Activated T-helper 2 cell treated with anti-CD3 and anti-CD28 coated beads, Interferon-gamma antibody, Interleukin-2, Interleukin-4, amounts not matched to agents 10 μg/mL and 5 μg/mL and 100 μg/mL, durations not matched to agents 14 hours and 24 hours and 36 hours (primary cell): ENCODE measurements at regions of chr3 and their contacts with region 1.

Region 1: DNA sequence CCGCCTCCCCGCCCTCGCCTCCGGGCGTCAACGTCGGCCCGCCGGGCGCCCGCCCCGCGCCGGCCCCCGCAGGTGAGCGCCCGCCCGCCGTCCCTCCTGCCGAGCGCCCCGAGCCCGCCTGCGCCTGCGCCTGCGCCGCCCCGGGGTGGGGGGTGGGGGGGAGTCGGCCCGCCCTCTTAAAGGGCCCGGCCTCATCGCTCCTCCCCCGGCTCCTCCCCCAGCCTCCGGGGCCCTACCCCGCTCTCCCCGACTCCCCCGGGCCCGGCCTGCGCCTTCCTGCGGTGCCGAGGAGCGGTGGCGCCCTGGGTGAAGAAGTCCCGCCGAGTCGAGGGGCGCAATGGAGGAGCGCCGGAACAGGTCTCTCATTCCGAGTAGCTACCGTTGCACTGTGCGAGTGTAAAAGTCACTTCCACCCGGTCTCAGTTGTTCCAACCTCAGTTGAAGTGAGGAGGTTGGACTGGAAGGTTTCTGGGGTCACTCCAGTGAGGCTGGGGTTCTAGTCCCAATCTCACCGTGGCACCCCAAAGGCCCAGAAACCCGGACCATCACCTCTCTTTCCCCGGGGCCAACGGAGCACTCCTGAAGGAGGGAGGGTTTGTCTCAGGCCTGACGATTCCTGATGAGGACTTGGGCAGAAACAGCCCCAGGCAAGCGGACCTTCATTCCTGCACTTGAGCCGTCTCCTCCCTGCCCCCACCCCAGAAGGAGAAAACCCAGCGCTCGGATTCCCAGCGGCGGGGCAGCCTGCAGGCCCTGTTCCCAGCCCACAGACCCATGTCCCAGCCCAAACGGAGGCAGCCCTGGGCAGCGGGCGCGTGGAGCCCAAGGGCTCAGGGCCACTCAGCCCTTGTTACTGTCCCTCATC is 1.5 kb upstream of the TNK2 start:
- DNase-seq: peak; percentile 84
- H3K4me3 Mint-ChIP-seq: peak overlapping the region; percentile 57
- H3K27ac Mint-ChIP-seq: peak overlapping the region; percentile 70
- H3K4me1 Mint-ChIP-seq: peaks cover 32% of the 10 kb centered on the region
- H3K27me3 Mint-ChIP-seq: no peaks in the 10 kb centered on the region

Region 2: DNA sequence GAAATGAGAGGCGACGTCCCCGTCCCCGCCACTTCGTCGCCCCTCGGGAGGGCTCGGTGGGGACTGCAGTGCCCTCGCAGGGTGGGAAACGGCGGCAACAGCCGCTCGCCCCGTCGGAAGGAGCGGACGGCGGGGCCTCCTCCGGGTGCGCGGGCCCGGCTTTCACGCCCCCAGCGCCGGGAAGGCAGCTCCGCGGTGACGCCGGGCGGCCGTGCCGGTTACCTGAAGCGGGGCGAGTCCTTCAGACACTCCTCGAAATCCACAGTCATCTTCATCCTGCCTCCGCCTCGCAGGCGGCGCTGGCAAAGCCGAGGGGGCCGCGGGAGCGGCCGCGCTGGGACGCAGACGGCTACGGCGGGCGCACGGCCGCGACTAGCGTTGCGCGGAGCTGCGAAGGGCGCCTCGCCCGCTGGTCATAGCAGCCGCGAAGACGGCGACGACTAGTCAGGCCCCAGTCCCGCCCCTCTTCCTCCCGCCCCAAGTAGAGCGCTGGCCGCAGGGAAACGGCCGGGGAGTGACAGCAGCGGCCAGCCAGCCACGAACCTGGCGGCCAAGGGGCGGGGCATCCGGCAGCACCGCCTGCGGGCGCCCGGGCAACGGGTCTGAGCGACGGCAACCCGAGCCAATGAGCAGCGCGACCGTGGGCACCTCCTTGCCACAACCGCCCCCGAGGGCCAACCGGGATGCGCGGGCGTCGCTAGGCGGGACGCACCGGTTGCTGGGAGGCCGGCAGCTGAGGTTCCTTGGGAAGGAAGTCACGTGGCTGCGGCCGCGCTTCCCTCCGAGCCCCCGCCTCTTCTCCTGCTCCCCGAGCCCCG is 467.1 kb before region 1 on chr3 and contains the start of gene ACAP2:
- intact Hi-C with region 1: loop called (anchors 5 kb)
- DNase-seq: peak; percentile 99
- H3K4me3 Mint-ChIP-seq: peak within 1 kb of the TSS; percentile 94
- H3K27ac Mint-ChIP-seq: peak within 1 kb of the TSS; percentile 85
- H3K4me1 Mint-ChIP-seq: peaks cover 31% of the 10 kb centered on the region
- H3K27me3 Mint-ChIP-seq: no peaks in the 10 kb centered on the region
- total RNA-seq, gene ACAP2: 49.8 and 51.5 TPM in 2 replicates

Region 3: GRCh38 chr3:195863121-195864006 is 46.5 kb before region 1 on chr3:
- intact Hi-C with region 1: loop called (anchors 1 kb)
- DNase-seq: peak; percentile 50
- H3K4me3 Mint-ChIP-seq: no peak overlapping the region
- H3K27ac Mint-ChIP-seq: peak overlapping the region; percentile 49
- H3K4me1 Mint-ChIP-seq: peaks cover 5% of the 10 kb centered on the region
- H3K27me3 Mint-ChIP-seq: no peaks in the 10 kb centered on the region

Region 4: DNA sequence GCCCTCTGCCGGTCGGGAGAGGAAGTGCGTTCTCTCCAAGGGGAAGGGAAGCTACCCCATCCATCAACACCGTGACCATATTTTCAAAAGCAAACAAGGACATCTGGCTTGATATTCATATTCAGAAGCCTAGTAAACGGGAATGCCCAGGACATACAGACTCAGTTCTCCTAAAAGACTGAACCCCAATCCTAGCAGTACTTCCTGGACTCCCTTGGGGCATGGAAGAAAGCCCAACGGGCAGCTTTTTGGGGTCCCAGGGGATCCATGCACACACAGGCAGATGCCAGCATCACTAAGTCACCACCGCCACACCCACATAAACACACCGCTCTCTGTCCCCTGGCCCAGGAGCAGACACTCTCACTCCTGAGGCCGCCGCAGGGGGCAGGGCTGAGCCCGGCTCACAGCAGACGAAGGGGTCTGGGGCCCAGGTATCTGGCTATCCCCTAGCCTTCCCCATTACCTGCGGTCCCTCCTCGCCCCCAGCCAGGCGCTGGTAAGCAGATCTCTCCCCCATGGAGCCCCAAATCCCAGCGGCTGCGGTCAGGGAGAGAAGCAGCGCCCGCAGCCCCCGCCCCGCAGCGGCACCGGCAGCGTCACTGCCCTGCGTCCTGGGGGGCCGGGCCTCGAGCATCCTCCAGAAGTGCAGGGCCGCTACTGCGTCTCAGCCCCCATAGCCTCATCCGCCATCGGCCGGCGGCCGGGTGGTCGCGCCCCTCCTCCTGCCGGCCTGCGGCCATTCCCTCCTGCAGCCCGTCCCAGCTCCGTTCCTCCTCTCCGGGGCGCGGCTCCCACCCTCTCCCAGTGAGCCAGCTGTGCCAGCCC is 14.9 kb before region 1 on chr3:
- intact Hi-C with region 1: loop called (anchors 1 kb)
- DNase-seq: peak; percentile 64
- H3K4me3 Mint-ChIP-seq: peak overlapping the region; percentile 83
- H3K27ac Mint-ChIP-seq: peak overlapping the region; percentile 81
- H3K4me1 Mint-ChIP-seq: peaks cover 34% of the 10 kb centered on the region
- H3K27me3 Mint-ChIP-seq: no peaks in the 10 kb centered on the region

Region 5: GRCh38 chr3:195956571-195956970 is 46.7 kb after region 1 on chr3:
- intact Hi-C with region 1: loop called (anchors 5 kb)
- DNase-seq: no peak
- H3K4me3 Mint-ChIP-seq: no peak overlapping the region
- H3K27ac Mint-ChIP-seq: peak overlapping the region; percentile 93
- H3K4me1 Mint-ChIP-seq: peaks cover 44% of the 10 kb centered on the region
- H3K27me3 Mint-ChIP-seq: no peaks in the 10 kb centered on the region